ENCODE measurements at regions of chr14 and their contacts with region 1.

Region 1: DNA sequence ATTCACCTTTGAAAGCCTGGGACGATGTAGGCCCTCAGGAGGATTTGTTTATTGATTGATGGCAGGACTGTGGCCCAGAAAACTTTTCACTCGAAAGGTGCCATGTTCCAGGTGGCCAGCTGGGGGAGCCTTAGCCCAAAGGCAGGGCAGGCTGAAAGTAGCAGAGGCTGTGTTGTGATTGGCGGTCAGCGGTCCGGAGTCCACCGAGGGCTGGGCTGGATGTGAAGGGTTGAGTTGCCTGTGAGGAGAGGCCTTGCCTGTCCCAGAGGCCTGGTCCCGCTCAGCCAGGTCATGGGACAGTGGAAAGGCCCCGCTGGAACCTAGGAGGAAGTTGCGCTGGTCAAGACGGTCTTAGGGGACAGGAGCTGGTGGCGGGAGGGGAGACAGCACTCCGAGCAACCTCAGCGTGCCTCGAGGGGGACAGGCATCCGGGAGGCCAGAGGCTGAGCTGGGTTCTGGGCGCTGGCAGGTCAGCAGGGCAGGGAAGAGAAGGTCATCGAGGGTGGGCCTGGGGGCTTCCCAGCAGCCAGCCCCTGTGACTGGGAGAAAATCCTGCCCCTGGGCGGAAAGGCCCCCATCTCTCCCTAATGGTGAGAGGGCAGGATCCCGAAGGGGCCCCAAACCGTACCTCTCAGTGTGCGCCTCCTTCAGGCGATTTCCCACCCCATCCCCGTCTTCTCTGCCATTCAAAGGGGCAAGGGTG is 26.3 kb downstream of the CMA1 start:
- DNase-seq: peak; percentile 77
- ATAC-seq: peak; percentile 90
- H3K4me3 Mint-ChIP-seq: peak overlapping the region; percentile 52
- H3K27ac Mint-ChIP-seq: peak overlapping the region; percentile 70
- H3K4me1 Mint-ChIP-seq: peaks cover 17% of the 10 kb centered on the region
- H3K27me3 Mint-ChIP-seq: no peaks in the 10 kb centered on the region

Region 2: DNA sequence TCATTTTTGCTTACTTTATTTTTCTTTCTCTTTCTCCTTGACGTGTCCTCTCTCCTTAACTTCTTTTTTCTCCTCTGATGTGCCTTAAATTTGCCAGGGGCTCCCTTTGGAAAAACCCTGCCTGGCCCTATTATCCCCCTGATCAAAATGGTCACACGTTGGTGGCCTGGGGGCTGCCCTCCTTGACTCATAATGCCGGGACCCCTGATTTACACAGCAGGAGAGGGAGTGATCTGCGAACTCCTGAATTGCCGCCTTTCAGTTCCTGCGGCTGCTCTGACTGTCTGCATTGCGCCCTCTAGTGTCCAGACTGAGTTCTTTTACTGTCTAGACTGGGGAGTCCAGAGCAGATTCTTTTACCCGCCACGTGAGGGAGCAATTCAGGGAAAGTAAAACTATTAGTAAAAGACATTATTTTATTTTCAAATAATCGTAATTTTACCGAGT is 197.1 kb after region 1 on chr14:
- CTCF ChIA-PET with region 1: interaction called, 3 read pairs
- POLR2A ChIA-PET with region 1: no interaction called
- intact Hi-C with region 1: loop called (anchors 2 kb)
- DNase-seq: peak; percentile 87
- ATAC-seq: peak; percentile 66
- H3K4me3 Mint-ChIP-seq: peak overlapping the region; percentile 69
- H3K27ac Mint-ChIP-seq: peak overlapping the region; percentile 95
- H3K4me1 Mint-ChIP-seq: peaks cover 61% of the 10 kb centered on the region
- H3K27me3 Mint-ChIP-seq: peaks cover 4% of the 10 kb centered on the region